ENCODE measurements at regions of chr3 and their contacts with region 1.

Region 1: DNA sequence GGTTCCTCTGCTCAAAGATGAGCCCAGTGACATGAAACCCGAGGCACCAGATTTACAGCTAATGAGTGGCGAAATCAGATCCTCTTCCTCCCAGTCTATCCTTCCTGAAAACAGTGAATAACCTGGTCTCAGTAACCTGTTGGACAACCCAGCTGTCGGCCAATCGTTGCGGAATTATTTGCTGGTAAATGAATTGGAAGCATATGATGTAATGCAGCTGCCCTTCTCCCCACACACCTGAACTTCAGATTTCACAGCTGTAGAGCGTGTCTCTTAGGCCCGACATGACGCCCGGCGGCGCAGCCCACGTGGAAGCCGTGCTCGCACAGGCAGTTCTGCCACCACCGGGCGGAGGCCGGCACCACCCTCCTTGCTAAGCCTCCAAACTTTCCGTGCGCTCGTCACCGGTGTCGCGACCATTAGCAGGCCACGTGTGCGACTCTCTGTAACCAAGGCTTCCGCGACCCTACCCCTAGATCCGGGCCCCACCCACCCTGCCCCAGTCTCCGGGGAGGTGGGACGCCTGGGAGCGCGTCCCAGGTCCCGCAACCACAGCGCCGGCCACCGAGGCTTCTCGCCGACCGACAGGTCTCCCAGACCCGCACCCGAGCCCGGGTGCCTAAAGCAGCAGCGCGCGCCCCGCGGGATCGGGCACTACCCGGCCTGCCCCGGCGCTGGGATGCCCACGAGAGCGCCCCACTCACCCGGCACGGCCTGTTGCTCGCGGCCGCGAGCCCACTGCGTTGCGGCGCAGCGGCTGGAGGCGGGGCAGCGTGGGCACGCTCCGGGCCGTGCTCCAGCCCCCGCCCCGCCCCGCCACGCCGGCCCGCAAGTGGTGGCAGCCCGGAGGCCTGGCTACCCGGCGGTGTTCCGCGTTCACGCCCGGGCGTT is at the start of gene RIOX2:
- DNase-seq: peak; percentile 86
- H3K4me3 Mint-ChIP-seq: peak within 1 kb of the TSS; percentile 93
- H3K27ac Mint-ChIP-seq: peak within 1 kb of the TSS; percentile 94
- H3K4me1 Mint-ChIP-seq: peaks cover 52% of the 10 kb centered on the region
- H3K27me3 Mint-ChIP-seq: no peaks in the 10 kb centered on the region
- total RNA-seq, gene RIOX2: 35.9 to 36.1 TPM

Region 2: GRCh38 chr3:97705764-97706163 is 266.2 kb before region 1 on chr3:
- CTCF ChIA-PET with region 1: no interaction called
- POLR2A ChIA-PET with region 1: no interaction called
- intact Hi-C with region 1: no loop called
- DNase-seq: no peak
- H3K4me3 Mint-ChIP-seq: no peak overlapping the region
- H3K27ac Mint-ChIP-seq: no peak overlapping the region
- H3K4me1 Mint-ChIP-seq: no peaks in the 10 kb centered on the region
- H3K27me3 Mint-ChIP-seq: peaks cover 3% of the 10 kb centered on the region

Region 3: DNA sequence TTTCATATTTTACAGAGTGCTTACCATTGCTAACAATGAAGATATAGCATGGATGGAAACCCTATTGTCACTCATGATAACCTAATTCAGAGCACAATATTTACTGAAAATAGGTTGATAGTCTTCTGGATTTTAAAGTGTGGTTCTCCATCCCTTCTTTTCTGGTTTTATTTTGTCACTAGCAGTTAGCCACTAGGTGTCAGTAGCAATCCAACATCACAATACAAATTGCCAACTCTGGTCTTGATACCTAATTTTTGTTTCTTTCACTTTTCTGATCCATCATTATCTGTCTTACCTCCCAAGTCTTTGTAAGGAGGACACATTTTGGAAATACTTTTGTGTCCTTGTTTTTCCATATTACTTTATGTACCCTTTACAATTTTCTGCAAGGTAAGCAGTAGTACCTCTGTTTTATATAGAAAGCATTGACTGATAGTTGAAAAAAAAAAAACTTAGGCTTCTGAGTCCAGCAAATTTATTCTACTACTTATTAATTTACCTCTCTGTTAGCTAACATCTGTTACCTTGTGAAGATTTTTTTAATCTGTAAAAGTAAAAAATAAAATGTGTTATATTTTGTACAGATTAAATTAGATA is 178.4 kb before region 1 on chr3:
- CTCF ChIA-PET with region 1: interaction called, 3 read pairs
- POLR2A ChIA-PET with region 1: no interaction called
- intact Hi-C with region 1: loop called (anchors 1 kb)
- DNase-seq: no peak
- H3K4me3 Mint-ChIP-seq: no peak overlapping the region
- H3K27ac Mint-ChIP-seq: no peak overlapping the region
- H3K4me1 Mint-ChIP-seq: no peaks in the 10 kb centered on the region
- H3K27me3 Mint-ChIP-seq: no peaks in the 10 kb centered on the region

Region 4: DNA sequence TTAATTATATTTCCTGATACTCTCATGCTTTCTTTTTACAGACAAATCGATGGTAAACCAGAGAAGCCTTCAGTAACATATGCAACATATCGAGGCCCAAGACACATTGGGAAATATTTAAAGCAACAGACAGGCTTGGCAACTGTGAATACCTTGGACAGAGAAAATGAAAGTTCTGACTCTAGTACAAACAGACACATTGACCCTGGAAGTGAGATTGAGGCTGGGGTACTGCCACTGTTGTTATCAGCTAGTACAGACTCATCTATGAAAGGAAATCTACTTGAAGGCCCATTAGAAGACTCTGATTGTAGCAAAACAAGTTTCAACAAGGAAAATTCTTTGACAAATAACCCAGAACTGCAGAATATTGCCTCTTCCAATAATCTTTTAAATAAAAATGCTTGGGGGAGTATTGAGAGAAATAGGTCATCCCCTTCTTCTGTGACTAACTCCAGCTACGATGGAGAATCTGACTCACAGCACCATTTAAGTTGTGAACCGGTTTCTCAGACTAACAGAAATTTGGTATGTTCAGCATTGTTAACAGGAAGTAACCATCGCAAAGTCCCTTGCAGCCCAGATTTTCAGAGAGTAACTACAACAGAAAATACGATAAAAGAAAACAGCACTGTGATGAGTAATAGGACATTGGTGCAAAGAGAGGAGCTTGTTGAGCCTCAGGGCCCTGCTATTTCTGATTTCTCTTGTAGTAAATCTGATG is 100.0 kb before region 1 on chr3:
- CTCF ChIA-PET with region 1: no interaction called
- POLR2A ChIA-PET with region 1: no interaction called
- intact Hi-C with region 1: loop called (anchors 2 kb)
- DNase-seq: peak; percentile 41
- H3K4me3 Mint-ChIP-seq: peak overlapping the region; percentile 14
- H3K27ac Mint-ChIP-seq: peak overlapping the region; percentile 81
- H3K4me1 Mint-ChIP-seq: peaks cover 25% of the 10 kb centered on the region
- H3K27me3 Mint-ChIP-seq: no peaks in the 10 kb centered on the region

Region 5: DNA sequence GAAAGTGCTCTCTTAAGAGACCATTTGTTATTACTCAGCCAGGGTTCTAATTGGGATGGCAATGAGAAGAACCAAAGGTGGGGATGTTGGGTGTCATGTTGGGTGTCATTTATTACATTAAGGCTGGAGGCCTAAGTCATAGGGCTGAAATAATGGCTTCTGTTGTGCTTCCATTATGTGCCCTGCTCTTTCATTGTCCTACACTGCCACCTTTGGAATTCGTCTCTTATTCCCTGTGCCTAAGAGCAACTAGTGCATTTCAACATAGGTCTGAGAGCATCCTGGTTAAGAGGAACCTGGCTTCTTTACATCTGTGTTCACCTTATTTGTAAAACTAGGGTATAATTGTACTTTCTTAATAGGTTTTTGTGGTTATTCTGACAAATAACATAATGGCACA is 31.9 kb before region 1 on chr3:
- CTCF ChIA-PET with region 1: interaction called, 4 read pairs
- POLR2A ChIA-PET with region 1: interaction called, 3 read pairs
- intact Hi-C with region 1: loop called (anchors 2 kb)
- DNase-seq: no peak
- H3K4me3 Mint-ChIP-seq: no peak overlapping the region
- H3K27ac Mint-ChIP-seq: no peak overlapping the region
- H3K4me1 Mint-ChIP-seq: peaks cover 21% of the 10 kb centered on the region
- H3K27me3 Mint-ChIP-seq: no peaks in the 10 kb centered on the region

Region 6: GRCh38 chr3:98022978-98023820 is 51.3 kb after region 1 on chr3:
- CTCF ChIA-PET with region 1: interaction called, 53 read pairs
- POLR2A ChIA-PET with region 1: no interaction called
- intact Hi-C with region 1: loop called (anchors 1 kb)
- DNase-seq: peak; percentile 93
- H3K4me3 Mint-ChIP-seq: no peak overlapping the region
- H3K27ac Mint-ChIP-seq: no peak overlapping the region
- H3K4me1 Mint-ChIP-seq: peaks cover 5% of the 10 kb centered on the region
- H3K27me3 Mint-ChIP-seq: no peaks in the 10 kb centered on the region